ENCODE measurements at regions of chr5 and their contacts with region 1.

Region 1: DNA sequence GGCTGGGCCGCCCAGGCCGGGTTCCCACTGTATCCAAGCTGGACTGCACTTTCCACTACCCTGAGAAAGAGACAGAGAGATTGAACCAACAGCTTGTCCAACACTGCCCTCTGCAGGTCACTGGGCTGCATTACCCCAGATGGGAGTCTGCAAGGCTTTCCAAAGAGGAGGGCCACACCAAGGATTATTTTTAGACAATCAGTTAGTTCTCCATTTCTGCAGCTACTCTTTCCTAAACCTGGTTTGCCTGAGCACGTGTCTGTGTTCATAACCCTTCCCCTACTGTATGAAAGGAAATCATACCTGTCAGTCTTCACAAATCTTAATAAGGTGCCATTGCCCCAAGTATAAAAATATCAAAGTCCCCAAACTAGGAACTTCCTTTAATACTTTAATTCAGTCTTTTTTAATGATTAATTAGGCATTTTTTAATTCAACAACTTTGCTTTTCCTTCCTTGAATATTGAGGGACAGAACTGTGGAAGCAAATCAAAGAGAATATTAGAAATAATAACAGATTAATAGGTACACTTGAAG is 13.4 kb upstream of the FGF1 start:
- DNase-seq: peak; percentile 86 to 95 (median 92)
- ATAC-seq: peak; percentile 94
- H3K4me3 ChIP-seq: no peak overlapping the region
- H3K27ac ChIP-seq: peak overlapping the region; percentile 91
- H3K4me1 ChIP-seq: peaks cover 8% of the 10 kb centered on the region
- H3K27me3 ChIP-seq: no peaks in the 10 kb centered on the region

Region 2: DNA sequence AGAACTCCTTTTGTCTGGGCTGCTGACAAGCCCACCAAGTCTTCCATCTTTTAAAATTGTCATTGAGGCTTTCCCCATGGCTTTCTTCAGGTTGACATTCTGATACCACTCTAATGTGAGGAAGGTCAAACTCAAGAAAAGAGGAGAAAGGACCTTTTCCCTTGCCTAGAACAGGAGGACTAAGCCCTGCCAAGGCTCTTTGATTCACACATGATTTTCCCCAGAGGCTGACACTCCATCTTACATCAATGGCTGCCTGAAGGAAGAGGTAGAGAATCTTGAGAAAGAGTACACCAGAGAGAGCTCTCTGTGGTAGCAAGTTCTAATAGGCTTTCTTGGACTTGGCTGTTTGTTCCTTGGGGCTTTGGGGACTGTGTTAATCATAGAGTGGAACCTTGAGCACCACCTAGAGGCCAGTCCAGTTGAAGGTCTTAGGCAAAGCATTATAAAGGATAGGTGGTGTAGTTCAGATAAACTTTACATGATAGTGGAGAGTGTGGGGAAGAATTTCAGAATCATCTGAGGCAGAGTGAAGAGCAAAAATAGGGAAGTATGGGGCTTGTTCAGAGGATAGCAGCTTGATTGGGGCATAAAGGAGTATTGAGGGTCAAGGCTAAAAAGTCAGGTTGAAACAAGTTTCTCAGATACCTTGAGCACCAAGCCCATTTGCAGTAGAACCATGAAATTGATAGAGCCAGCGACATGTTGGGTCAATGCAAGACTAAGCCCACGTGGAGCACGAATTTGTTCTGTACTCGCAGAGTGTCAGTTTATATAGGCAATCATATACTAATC is 553.9 kb before region 1 on chr5:
- intact Hi-C with region 1: loop called in 2 of 4 experiments (anchors 5 to 10 kb)
- DNase-seq: peak in 2 of 3 donors; percentile 57 to 83
- ATAC-seq: peak; percentile 85 to 87
- H3K4me3 ChIP-seq: no peak overlapping the region
- H3K27ac ChIP-seq: no peak overlapping the region
- H3K4me1 ChIP-seq: no peaks in the 10 kb centered on the region
- H3K27me3 ChIP-seq: no peaks in the 10 kb centered on the region

Region 3: DNA sequence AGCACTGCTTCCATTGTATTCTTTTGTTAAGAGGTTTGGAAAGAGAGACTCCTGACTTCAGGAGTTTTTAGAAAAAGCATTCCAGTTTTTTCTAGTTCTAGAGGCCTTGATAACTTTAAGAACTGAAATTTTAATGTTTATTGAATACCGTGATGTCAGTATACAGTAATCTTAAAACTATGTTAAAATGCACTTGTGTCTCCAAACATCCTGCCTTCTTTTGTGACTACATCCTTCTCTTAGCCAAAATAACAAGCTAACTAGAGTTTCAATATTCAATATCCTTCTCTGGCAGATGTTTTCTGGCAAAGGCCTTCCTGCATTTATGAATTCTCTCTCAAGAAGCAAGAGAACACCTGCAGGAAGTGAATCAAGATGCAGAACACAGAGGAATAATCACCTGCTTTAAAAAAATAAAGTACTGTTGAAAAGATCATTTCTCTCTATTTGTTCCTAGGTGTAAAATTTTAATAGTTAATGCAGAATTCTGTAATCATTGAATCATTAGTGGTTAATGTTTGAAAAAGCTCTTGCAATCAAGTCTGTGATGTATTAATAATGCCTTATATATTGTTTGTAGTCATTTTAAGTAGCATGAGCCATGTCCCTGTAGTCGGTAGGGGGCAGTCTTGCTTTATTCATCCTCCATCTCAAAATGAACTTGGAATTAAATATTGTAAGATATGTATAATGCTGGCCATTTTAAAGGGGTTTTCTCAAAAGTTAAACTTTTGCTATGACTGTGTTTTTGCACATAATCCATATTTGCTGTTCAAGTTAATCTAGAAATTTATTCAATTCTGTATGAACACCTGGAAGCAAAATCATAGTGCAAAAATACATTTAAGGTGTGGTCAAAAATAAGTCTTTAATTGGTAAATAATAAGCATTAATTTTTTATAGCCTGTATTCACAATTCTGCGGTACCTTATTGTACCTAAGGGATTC is 547.5 kb before region 1 on chr5:
- intact Hi-C with region 1: loop called in 2 of 4 experiments (anchors 5 to 10 kb)
- DNase-seq: peak in 1 of 3 donors; percentile 71
- ATAC-seq: peak; percentile 65 to 74
- H3K4me3 ChIP-seq: no peak overlapping the region
- H3K27ac ChIP-seq: no peak overlapping the region
- H3K4me1 ChIP-seq: no peaks in the 10 kb centered on the region
- H3K27me3 ChIP-seq: no peaks in the 10 kb centered on the region

Region 4: GRCh38 chr5:142167458-142167857 is 531.8 kb before region 1 on chr5:
- intact Hi-C with region 1: loop called in 1 of 4 experiments (anchors 10 kb)
- DNase-seq: no peak
- ATAC-seq: no peak
- H3K4me3 ChIP-seq: no peak overlapping the region
- H3K27ac ChIP-seq: no peak overlapping the region
- H3K4me1 ChIP-seq: peaks cover 4% of the 10 kb centered on the region
- H3K27me3 ChIP-seq: no peaks in the 10 kb centered on the region

Region 5: GRCh38 chr5:142597546-142598341 is 101.5 kb before region 1 on chr5:
- intact Hi-C with region 1: no loop called
- DNase-seq: peak in 1 of 3 donors; percentile 31
- ATAC-seq: no peak
- H3K4me3 ChIP-seq: no peak overlapping the region
- H3K27ac ChIP-seq: no peak overlapping the region
- H3K4me1 ChIP-seq: peaks cover 6% of the 10 kb centered on the region
- H3K27me3 ChIP-seq: no peaks in the 10 kb centered on the region

Region 6: GRCh38 chr5:142611154-142611553 is 88.1 kb before region 1 on chr5:
- intact Hi-C with region 1: loop called (anchors 2 to 10 kb)
- DNase-seq: peak; percentile 73 to 89 (median 83)
- ATAC-seq: peak; percentile 80 to 86
- H3K4me3 ChIP-seq: no peak overlapping the region
- H3K27ac ChIP-seq: no peak overlapping the region
- H3K4me1 ChIP-seq: no peaks in the 10 kb centered on the region
- H3K27me3 ChIP-seq: no peaks in the 10 kb centered on the region

Region 7: DNA sequence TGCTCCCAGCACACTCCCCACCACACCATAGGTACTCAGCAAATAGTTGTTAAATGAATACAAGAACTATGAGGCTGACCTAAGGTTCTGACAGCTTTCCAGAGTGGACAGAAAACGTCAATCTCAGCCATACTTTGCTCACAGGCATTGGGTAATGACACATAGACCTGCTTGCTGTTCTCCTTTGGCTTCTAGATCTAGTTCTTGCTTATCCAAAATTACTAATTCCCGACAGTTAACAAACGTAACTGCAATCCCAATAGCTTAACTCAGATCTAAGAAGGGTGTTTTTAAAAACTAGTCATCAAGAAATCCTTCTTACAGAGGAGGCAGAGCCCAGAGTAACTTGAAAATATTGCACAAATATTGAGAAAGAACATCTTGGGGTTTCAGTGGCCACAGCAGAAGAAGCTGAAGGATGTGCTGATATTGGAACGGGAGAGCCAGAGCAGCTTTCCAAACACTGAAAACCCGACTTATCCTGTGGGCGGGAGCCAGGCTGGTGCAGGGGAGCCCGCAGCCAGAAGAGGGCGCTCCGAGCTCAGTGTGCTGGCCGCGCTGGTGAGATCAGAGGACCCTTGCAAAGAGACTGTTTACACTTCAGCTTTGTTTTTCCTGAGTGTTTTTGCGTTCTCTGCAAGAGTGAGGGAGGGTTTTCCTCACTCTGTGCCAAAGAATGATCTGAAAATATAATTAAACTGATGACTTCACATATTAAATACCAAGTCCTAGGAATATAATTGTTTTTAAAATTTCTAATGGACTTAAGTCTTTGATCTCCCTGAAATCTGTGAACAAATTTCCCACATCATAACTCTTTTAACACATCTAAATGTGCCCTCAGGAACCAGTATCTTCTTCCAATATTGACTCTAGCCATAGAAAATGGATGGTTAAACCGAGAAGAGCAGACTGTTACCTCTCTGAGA is 43.6 kb before region 1 on chr5:
- intact Hi-C with region 1: loop called (anchors 2 to 5 kb)
- DNase-seq: peak; percentile 85 to 97 (median 95)
- ATAC-seq: peak; percentile 93 to 95
- H3K4me3 ChIP-seq: no peak overlapping the region
- H3K27ac ChIP-seq: peak overlapping the region; percentile 78
- H3K4me1 ChIP-seq: peaks cover 8% of the 10 kb centered on the region
- H3K27me3 ChIP-seq: no peaks in the 10 kb centered on the region

Region 8: DNA sequence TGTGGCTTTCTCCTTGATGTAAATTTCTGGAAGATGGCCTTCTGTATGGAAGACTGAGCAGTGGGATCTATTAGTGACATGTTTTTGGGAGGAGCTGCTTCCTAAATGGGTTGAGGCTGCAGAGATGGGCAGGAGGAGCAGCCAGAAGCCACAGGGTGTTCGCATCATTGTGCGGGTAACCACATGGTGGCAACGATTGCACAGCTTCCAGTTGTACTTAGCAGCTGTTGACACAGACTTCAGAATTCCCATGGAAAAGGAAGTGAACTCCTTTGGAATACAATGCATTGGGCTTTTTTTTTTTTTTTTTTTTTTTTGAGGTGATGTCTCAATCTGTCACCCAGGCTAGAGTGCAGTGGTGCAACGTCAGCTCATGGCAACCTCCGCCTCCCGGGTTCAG is 406.9 kb after region 1 on chr5:
- intact Hi-C with region 1: no loop called
- DNase-seq: peak in 2 of 3 donors; percentile 38 to 76
- ATAC-seq: peak; percentile 76 to 83
- H3K4me3 ChIP-seq: no peak overlapping the region
- H3K27ac ChIP-seq: no peak overlapping the region
- H3K4me1 ChIP-seq: peaks cover 13% of the 10 kb centered on the region
- H3K27me3 ChIP-seq: no peaks in the 10 kb centered on the region

Measured in right cardiac atrium (tissue), 5 donors.